Panc1 (cell line): ENCODE measurements at regions of chr12 and their contacts with region 1.

Region 1: GRCh38 chr12:89542912-89543592 is 17.2 kb upstream of the POC1B start:
- DNase-seq: peak; percentile 33
- ATAC-seq: peak; percentile 94
- H3K4me3 ChIP-seq: no peak overlapping the region
- H3K27ac ChIP-seq: no peak overlapping the region
- H3K4me1 ChIP-seq: no peaks in the 10 kb centered on the region
- H3K27me3 ChIP-seq: no peaks in the 10 kb centered on the region
- CTCF ChIP-seq: peak; percentile 91

Region 2: DNA sequence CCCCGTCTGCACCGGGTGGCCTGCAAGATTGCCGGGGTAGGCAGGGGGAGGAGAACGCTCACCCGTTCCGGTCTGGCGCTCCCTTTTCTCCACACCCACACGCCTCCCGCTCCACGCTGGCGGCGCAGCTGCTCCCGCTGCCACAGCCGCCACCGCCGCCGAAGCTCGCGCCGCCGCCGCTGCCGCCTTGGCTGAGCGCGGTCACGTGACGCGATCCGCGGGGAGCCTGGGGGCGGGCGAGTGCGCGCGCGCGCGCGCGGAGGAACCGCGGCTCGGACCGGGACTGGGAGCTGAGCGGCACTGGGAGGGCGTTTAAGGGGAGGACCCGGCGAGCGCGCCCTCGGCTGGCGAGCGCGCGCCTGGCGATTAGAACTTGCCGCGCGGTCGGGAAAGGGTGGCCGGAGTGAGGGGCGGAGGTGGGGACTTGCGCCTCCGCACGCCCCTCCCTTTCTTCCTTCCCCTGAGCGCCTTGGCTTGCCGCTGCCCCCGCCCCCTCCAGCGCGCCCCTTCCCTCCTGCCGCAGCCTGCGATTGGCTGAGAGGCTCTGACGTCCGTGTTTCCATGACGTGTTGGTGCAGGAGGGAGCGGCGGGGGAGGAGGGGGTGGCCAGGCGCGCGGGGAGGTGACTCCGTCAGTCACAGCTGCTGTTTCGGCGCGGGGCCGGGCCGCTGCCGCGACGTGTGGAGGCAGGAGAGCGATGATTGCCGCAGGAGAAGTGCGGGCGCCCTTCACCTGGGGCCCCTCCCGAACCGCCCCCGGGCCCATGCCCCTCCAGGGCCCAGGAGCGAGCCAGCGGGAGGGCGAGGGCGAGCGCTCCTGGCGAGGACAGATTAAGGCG is 166.3 kb after region 1 on chr12:
- CTCF ChIA-PET with region 1: no interaction called
- POLR2A ChIA-PET with region 1: no interaction called
- in situ Hi-C with region 1: no loop called
- intact Hi-C with region 1: loop called (anchors 5 kb)
- DNase-seq: peak; percentile 75
- ATAC-seq: peak; percentile 86
- H3K4me3 ChIP-seq: peak overlapping the region; percentile 78 to 88
- H3K27ac ChIP-seq: peak overlapping the region; percentile 79
- H3K4me1 ChIP-seq: peaks cover 15% of the 10 kb centered on the region
- H3K27me3 ChIP-seq: peaks cover 3% of the 10 kb centered on the region
- CTCF ChIP-seq: no peak

Region 3: DNA sequence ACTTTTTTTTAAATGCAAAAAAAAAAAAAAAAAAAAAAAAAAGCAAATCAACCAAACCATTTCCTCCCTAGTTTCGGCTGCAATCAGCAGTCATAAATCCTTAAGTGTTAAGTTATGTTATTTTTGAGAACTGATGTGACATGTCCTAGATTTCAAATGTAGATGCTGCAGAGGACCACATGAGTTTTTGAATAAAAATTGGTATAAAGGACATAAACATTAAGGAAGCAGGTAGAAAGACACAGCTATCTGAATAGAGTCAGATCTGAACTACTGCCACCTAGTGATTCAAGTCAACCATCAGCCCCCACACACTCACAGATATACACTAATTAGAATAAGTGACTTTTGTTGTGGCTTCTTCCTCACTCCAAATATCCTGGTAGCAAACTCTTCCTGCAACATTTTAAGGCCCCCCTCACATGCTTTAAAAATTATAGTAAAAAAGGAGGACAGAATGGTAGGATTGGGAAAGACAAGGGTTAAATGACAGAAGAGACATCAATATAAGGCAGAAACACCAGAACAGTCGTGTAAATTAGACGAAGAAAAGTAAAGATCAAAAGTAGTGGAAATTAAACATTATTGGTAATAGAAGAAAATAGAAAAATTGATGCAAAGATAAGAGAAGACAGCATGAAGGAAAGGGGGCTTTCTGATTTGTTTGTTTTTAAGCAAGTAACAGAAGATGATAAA is 560.1 kb after region 1 on chr12:
- CTCF ChIA-PET with region 1: no interaction called
- POLR2A ChIA-PET with region 1: no interaction called
- in situ Hi-C with region 1: no loop called
- intact Hi-C with region 1: loop called (anchors 10 kb)
- DNase-seq: no peak
- ATAC-seq: no peak
- H3K4me3 ChIP-seq: no peak overlapping the region
- H3K27ac ChIP-seq: no peak overlapping the region
- H3K4me1 ChIP-seq: no peaks in the 10 kb centered on the region
- H3K27me3 ChIP-seq: no peaks in the 10 kb centered on the region
- CTCF ChIP-seq: peak; percentile 49; the same call in 1 of the 2 replicates

Region 4: DNA sequence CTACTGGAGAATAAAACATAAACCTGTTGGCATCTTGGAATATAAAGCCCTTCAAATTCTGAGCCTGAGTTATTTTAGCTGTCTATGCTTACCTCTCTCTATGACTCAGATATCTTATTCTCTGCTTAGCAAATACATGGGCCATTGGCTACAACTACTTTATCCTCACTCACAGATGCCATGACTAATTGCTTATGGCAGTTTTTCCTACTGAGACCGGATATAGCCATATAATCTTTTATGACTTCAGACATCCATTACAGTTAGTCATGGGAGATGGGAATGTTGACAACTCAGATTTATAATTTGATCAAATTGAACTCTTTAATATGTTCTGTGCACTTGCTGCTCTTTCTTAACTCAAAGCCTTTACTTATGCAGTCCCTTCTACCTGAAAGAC is 668.0 kb after region 1 on chr12:
- CTCF ChIA-PET with region 1: no interaction called
- POLR2A ChIA-PET with region 1: interaction called, 15 read pairs
- in situ Hi-C with region 1: no loop called
- intact Hi-C with region 1: no loop called
- DNase-seq: peak; percentile 8
- ATAC-seq: peak; percentile 66
- H3K4me3 ChIP-seq: no peak overlapping the region
- H3K27ac ChIP-seq: no peak overlapping the region
- H3K4me1 ChIP-seq: no peaks in the 10 kb centered on the region
- H3K27me3 ChIP-seq: no peaks in the 10 kb centered on the region
- CTCF ChIP-seq: no peak

Region 5: DNA sequence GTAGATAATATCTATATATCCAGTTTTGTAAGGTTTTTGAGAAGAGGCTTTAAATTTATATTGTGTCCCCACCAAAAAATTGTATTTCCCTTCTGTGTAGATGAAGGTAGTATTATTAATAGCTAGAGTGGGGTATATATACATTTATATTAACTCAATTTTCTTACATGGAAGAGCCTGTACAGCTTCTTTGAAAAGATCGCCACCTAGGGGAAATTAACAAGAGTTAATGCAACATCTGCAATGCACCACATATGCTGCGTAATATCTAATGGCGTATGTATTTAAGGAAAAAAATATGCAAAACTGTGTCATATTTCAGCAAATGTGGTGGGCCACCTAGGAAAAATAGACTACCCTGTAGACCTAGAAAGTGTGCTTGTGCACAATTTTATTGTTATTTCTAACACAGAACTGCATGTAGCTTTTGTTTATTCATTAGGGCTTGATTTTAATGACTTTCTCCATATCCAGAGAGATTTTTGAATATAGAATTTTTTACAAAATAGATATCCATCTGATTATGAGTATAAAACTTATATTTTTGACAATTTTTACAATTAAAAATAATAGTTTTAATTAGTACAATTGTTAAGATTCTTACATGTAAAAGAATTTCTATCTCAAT is 1397.9 kb after region 1 on chr12:
- CTCF ChIA-PET with region 1: no interaction called
- POLR2A ChIA-PET with region 1: no interaction called
- in situ Hi-C with region 1: no loop called
- intact Hi-C with region 1: loop called (anchors 10 kb)
- DNase-seq: peak; percentile 15
- ATAC-seq: peak; percentile 84
- H3K4me3 ChIP-seq: no peak overlapping the region
- H3K27ac ChIP-seq: no peak overlapping the region
- H3K4me1 ChIP-seq: no peaks in the 10 kb centered on the region
- H3K27me3 ChIP-seq: no peaks in the 10 kb centered on the region
- CTCF ChIP-seq: peak; percentile 74; the same call in 1 of the 2 replicates